ENCODE measurements at regions of chr3 and their contacts with region 1.

Region 1: DNA sequence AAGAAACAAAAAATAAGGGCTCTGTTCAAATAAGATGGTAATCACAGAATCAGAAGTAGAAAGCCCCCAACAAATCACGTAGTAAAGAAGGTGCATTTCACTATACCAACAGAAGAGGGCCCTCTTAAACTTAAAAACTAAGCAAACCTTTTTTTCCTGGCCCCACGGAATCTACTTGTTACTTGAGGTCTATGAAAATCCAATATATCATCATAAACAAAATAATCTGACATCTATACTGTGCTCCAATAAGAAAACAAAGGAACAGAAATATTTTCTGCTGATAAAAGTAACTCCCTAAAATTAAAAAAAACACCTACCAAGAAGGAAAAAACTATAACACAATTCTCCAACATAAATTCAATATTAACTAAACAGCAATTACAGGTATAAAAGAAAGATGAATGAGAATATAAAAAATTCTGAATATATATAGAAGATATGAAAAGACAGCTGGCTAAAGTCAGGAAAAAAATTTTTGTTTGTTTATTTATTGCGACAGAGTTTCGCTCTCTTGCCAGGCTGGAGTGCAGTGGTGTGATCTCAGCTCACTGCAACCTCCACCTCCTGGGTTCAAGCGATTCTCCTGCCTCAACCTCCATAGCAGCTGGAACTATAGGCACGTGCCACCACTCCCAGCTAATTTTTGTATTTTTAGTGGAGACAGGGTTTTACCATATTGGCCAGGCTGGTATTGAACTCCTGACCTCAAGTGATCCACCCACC is 81.8 kb downstream of the CLASP2 start:
- DNase-seq: no peak
- H3K4me3 ChIP-seq: no peak overlapping the region
- CTCF ChIP-seq: peak; percentile 49

Region 2: GRCh38 chr3:33392703-33393125 is 243.6 kb before region 1 on chr3:
- CTCF ChIA-PET with region 1: no interaction called
- POLR2A ChIA-PET with region 1: no interaction called
- DNase-seq: peak; percentile 81
- H3K4me3 ChIP-seq: no peak overlapping the region
- CTCF ChIP-seq: no peak

Region 3: DNA sequence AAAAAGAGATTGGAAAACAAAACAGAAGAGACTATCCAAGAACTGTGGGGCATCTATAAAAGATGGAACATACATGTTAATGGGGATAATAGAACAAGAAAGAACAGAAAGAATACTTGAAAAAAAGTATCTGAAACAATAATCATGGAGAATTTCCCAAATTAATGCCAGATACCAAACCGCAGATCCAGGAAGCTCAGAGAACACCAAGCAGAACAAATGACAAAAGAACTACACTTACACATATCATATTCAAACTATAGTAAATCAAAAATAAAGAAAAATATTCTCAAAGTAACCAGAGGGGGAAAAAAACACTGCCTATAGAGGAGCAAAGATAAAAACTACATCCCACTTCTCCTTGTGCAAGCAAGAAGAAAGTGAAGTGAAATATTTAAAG is 41.8 kb after region 1 on chr3:
- CTCF ChIA-PET with region 1: no interaction called
- POLR2A ChIA-PET with region 1: no interaction called
- DNase-seq: no peak
- H3K4me3 ChIP-seq: no peak overlapping the region
- CTCF ChIP-seq: no peak

Region 4: DNA sequence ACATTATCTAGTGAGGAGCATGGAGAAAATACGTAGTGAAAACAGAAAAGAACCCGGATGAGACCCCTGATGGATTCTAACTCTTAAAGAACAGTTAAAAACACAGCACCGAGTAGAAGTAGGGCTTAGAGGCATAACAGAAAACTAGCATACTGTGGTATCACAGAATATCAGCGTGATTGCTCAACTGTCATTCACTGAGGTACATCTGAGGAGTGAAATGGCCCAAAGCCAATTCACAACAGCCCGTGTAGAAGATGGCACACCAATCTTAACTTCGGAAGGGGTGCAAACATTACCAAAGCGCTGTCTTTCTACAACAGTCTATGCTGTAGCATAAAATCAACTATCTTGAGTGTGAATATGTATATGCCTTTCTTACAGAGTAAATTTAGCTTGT is 79.9 kb after region 1 on chr3:
- CTCF ChIA-PET with region 1: interaction called, 11 read pairs
- POLR2A ChIA-PET with region 1: no interaction called
- DNase-seq: no peak
- H3K4me3 ChIP-seq: no peak overlapping the region
- CTCF ChIP-seq: no peak

Region 5: DNA sequence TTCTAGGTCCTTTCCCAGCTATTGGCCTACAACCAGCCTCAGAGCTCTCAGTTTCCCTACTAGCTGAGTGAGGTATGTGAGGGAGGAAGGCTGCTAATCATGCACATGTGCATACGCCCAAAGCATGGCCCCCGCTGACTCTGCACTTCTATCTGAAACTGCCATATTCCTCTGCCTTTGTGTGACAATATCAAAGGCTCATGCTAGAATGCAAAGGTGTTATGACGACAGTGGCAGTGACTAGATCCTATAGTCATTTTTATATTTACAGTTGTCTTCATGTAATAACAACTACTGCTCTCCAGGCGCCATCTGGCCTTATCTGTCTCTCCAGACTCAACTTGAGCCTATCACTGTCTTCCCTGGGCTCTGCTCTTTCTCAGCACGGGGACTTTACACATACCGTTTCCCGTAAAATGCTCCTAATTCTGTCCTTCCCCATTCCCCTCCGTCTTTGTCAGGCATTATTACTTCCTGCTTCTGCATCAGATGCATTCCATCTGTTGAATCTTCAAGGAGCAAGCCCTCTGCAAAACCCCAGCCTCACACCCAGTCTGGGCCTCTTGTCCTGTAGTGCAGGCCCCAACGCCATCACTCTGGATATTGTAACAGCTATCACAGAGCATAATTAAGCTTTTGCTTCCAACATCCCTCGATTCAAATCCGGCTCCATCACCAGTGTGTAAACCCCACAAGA is 264.7 kb after region 1 on chr3:
- CTCF ChIA-PET with region 1: no interaction called
- POLR2A ChIA-PET with region 1: no interaction called
- DNase-seq: no peak
- H3K4me3 ChIP-seq: no peak overlapping the region
- CTCF ChIP-seq: no peak

Region 6: GRCh38 chr3:34178415-34178814 is 542.1 kb after region 1 on chr3:
- CTCF ChIA-PET with region 1: no interaction called
- POLR2A ChIA-PET with region 1: no interaction called
- DNase-seq: peak; percentile 61
- H3K4me3 ChIP-seq: no peak overlapping the region
- CTCF ChIP-seq: no peak